ENCODE measurements at regions of chr19 and their contacts with region 1.

Region 1: GRCh38 chr19:42108527-42109389 is 23.5 kb downstream of the POU2F2 start:
- DNase-seq: peak; percentile 74
- ATAC-seq: peak; percentile 90
- H3K4me3 ChIP-seq: no peak overlapping the region
- H3K27ac ChIP-seq: no peak overlapping the region
- H3K4me1 ChIP-seq: no peaks in the 10 kb centered on the region
- H3K27me3 ChIP-seq: no peaks in the 10 kb centered on the region; a peak in 2 of 5 replicates
- CTCF ChIP-seq: peak; percentile 96
- EP300 ChIP-seq: no peak
- POLR2A ChIP-seq: no peak
- RAD21 ChIP-seq: peak; percentile 88

Region 2: DNA sequence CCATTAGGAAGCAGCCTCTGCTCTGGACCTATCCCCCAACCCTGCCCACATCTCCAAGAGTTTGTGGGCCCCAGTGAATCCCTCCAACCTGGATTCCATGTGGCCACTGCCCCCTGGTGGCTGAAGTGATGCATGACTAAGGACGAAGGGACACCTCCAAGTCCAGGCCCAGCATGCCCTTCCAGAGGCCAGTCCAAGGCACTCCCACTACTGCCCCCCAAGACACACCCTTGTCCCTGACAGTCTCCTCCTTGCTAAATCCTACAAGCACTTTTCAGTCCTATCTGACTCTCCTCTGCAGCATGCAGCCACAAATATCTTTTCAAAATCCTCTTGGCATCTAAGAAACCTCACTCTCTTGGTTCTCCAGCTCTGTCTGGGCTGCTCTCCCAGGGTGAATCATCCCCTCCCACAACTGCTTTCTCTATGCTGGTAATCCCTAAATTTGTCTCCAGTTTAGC is 75.7 kb after region 1 on chr19:
- CTCF ChIA-PET with region 1: interaction called, 26 read pairs
- POLR2A ChIA-PET with region 1: no interaction called
- in situ Hi-C with region 1: no loop called
- intact Hi-C with region 1: loop called (anchors 1 kb)
- DNase-seq: peak; percentile 59
- ATAC-seq: peak; percentile 93
- H3K4me3 ChIP-seq: no peak overlapping the region
- H3K27ac ChIP-seq: no peak overlapping the region
- H3K4me1 ChIP-seq: no peaks in the 10 kb centered on the region
- H3K27me3 ChIP-seq: peaks cover 5 to 36% of the 10 kb centered on the region in 2 experiments; a peak in 3 of 5 replicates
- CTCF ChIP-seq: peak; percentile 91
- EP300 ChIP-seq: no peak
- POLR2A ChIP-seq: no peak
- RAD21 ChIP-seq: peak; percentile 78

Region 3: DNA sequence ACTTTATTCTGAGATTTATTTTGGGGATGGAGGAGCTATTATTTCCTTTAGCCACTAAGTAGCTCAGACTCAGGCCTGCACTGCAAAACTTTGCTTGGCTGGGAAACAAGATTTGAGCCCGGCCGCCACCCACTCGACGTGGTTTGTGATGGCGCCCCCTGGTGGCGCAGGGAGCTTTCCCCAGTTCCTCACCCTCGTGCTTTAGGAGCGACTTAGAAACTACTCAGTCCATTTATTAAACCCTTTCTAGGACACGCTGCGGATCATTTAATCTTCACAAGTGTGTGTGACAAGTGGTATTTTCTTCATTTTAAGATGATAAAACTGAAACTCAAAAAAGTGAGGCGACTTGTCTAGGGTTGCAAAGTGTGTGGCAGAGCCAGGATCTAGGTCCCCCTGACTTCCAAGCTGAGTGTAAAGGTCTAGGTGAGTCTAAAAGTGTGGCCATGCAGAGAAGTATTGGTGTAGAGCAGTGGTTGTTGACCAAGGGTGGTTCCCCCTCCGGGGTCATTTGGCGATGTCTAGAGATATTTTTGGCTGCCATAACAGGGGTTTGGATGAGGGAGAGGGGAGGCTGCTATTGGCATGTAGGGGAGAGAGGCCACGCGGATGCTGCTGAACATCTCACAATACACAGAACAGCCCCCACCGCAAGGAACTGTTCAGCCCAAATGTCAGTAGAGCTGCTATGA is 331.7 kb after region 1 on chr19:
- CTCF ChIA-PET with region 1: no interaction called
- POLR2A ChIA-PET with region 1: no interaction called
- in situ Hi-C with region 1: no loop called
- intact Hi-C with region 1: no loop called
- DNase-seq: peak; percentile 57
- ATAC-seq: peak; percentile 42
- H3K4me3 ChIP-seq: peak overlapping the region; percentile 20 to 52 (median 32); a peak in 4 of 6 replicates
- H3K27ac ChIP-seq: peak overlapping the region; percentile 41
- H3K4me1 ChIP-seq: peaks cover 85% of the 10 kb centered on the region
- H3K27me3 ChIP-seq: no peaks in the 10 kb centered on the region
- CTCF ChIP-seq: peak; percentile 82
- EP300 ChIP-seq: no peak
- POLR2A ChIP-seq: no peak
- RAD21 ChIP-seq: 0 out of 2 replicates have a peak, but pooled peaks have one; percentile 11

Measured in HepG2 (cell line).